ENCODE measurements at regions of chr1 and their contacts with region 1.

Region 1: DNA sequence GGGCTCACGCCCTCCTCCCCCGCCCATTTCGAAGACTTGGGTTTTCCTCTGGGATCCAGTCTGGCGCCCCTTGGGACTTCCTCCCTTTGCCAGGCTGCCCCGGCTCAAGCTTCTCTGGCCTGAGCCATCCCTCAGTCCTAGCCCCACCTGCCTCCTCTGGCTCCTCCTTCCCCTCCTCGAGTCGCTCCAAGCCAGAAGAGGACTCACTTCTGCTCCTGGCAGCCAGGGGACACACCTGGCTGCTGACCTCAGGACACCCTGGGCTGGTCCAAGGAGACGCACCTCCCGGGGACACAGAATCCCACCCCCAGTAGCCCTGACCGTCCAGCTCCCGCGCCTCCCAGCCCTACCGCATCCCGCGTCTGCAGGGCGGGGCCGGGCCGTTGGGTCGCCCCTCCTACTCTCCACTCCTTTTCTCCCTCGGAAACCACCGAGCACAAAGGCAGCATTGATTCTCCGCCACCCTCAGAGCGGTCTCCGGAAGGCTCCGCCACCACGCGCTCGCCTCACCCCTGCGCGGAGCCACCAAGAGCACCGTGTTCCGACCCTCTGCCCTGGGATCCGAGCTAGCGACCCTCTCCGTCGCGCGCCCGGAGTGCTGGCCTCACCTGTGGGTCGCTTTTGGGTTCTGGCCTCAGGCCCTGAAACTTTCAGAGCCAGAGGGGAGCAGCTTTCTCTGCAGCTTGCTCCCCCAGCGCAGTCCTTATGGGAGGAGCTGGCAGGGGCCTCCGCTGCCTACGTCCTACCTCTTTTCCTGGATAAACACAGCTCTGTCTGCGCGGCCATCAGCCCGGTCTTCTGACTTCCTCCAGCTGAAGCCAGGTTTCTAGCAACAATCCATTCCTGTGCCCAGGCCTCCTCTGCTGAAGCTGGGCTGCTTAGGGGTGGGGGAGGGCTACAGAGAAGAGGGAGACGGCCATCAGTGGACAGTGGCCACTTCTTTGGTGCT is at the start of gene C2CD4D:
- DNase-seq: peak; percentile 82
- H3K4me3 Mint-ChIP-seq: peak within 1 kb of the TSS; percentile 89
- H3K27ac Mint-ChIP-seq: peak within 1 kb of the TSS; percentile 89
- H3K4me1 Mint-ChIP-seq: peaks cover 64% of the 10 kb centered on the region
- H3K27me3 Mint-ChIP-seq: no peaks in the 10 kb centered on the region
- total RNA-seq, gene C2CD4D: 3.0 to 3.7 TPM

Region 2: GRCh38 chr1:151739590-151740375 is 99.9 kb before region 1 on chr1:
- CTCF ChIA-PET with region 1: interaction called, 12 read pairs
- POLR2A ChIA-PET with region 1: no interaction called
- DNase-seq: no peak
- H3K4me3 Mint-ChIP-seq: no peak overlapping the region
- H3K27ac Mint-ChIP-seq: no peak overlapping the region
- H3K4me1 Mint-ChIP-seq: peaks cover 7% of the 10 kb centered on the region
- H3K27me3 Mint-ChIP-seq: peaks cover 12% of the 10 kb centered on the region

Region 3: GRCh38 chr1:151790071-151790940 is 49.4 kb before region 1 on chr1 and contains the start of gene TDRKH:
- CTCF ChIA-PET with region 1: interaction called, 18 read pairs
- POLR2A ChIA-PET with region 1: interaction called, 11 read pairs
- DNase-seq: peak; percentile 99
- H3K4me3 Mint-ChIP-seq: peak within 1 kb of the TSS; percentile 88
- H3K27ac Mint-ChIP-seq: peak within 1 kb of the TSS; percentile 66
- H3K4me1 Mint-ChIP-seq: peaks cover 28% of the 10 kb centered on the region
- H3K27me3 Mint-ChIP-seq: no peaks in the 10 kb centered on the region
- total RNA-seq, gene TDRKH: 27.1 to 30.9 TPM

Region 4: DNA sequence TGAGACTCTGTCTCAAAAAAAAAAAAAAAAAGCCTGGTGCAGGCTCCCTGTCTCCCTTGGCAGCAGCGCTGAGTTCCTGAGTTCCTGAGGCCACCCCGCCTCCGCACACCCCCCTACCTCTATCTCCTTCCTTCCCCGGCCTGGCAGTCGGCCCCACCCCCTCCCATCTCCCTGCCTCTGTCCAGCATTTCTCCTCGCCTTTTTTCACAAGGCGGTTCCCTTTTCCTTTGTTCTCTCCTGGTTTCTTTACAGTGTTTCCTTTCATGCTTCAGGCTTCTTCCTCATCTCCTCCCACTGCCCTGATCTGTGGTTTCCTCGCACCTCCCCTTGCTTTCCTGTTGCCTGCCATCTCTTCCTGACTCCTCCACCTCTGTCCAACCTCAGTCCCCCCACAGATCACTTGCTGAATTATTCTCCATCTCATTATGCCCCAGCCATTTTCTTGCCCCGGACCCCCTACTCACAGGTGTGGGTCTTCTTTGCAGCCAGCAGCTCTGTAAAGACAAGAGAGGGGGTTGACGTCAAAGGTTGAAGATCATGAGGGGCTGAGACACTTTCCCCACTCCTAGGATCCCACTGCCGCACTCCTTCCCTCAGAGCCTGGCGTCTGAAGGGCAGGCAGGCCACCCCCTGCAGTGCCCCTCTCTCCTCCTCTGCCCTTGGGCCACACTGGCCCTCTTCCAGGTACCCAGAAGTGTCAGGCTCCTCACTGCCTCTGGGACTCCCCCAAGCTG is 10.6 kb before region 1 on chr1:
- CTCF ChIA-PET with region 1: interaction called, 21 read pairs
- POLR2A ChIA-PET with region 1: interaction called, 19 read pairs
- DNase-seq: no peak
- H3K4me3 Mint-ChIP-seq: peak overlapping the region; percentile 65
- H3K27ac Mint-ChIP-seq: peak overlapping the region; percentile 97
- H3K4me1 Mint-ChIP-seq: peaks cover 90% of the 10 kb centered on the region
- H3K27me3 Mint-ChIP-seq: no peaks in the 10 kb centered on the region

Region 5: GRCh38 chr1:151892190-151892589 is 52.5 kb after region 1 on chr1:
- CTCF ChIA-PET with region 1: no interaction called
- POLR2A ChIA-PET with region 1: no interaction called
- DNase-seq: no peak
- H3K4me3 Mint-ChIP-seq: no peak overlapping the region
- H3K27ac Mint-ChIP-seq: peak overlapping the region; percentile 22
- H3K4me1 Mint-ChIP-seq: peaks cover 37% of the 10 kb centered on the region
- H3K27me3 Mint-ChIP-seq: no peaks in the 10 kb centered on the region

Measured in activated CD4-positive, alpha-beta memory T cell treated with anti-CD3 and anti-CD28 coated beads, Interleukin-2, amount 10 ng/mL, durations not matched to agents 7 days and 5 days (primary cell).